CD8-positive, alpha-beta T cell (primary cell): ENCODE measurements at regions of chrX and their contacts with region 1.

Region 1: DNA sequence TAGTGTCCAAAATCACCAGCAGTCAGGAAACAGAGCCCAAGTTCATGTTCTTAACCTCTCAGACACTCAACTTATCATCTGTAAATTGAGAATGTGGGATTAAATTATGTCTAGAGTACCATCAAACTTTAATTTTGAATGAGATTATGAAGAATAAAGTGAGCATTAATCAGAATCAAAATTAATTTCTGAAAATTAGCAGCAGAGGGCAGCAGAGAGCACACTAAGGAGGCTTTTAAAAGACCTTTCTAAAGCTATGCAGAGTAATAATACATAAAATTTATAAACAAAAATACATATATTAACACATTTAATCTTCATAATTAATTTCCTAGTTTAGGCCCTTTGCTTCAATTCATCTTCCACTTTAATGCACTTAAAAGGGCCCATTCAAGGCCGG is 7.1 kb downstream of the TASL start:
- DNase-seq: peak in 2 of 9 experiments; percentile 39 to 53
- ATAC-seq: no peak
- H3K4me3 ChIP-seq: no peak overlapping the region
- H3K4me3 Mint-ChIP-seq: no peak overlapping the region
- H3K27ac ChIP-seq: no peak overlapping the region
- H3K27ac Mint-ChIP-seq: no peak overlapping the region
- H3K4me1 ChIP-seq: no peaks in the 10 kb centered on the region
- H3K4me1 Mint-ChIP-seq: peaks cover 16% of the 10 kb centered on the region
- H3K27me3 ChIP-seq: no peaks in the 10 kb centered on the region
- H3K27me3 Mint-ChIP-seq: no peaks in the 10 kb centered on the region
- CTCF ChIP-seq: peak; percentile 64

Region 2: DNA sequence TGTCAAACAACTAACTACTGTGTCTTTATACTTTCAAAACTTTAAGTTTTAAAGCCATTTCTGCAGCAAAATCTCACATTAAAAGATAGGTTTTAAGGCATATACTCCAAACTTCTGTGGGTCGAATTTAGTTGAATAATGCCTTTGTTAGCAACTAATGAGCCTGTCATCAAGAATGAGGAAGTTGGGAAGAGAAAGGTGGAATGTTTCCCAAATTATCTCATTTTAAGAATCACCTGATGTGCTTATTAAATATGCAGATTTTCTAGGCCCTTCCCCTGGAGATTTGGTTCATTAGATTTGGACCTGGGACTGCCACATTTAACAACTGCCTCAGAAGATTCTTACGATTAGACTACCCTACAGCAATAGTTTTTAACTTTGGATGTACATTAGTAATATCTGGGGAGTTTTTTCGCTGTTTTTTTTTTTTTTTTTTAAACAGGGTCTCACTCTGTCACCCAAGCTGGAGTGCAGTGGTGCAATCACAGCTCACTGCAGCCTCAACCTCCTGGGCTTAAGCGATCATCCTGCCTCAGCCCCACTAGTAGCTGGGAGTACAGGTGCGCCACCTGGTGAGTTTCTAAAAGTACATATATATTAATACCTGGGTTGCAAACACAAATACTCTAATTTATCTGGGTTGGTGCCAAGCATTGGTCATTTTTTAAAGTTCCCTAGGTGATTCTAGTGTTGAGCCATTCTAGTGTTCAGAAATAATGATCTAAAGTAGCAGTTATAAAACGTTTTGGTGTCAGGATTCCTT is 23.1 kb after region 1 on chrX:
- CTCF ChIA-PET with region 1: interaction called, 21 read pairs
- POLR2A ChIA-PET with region 1: no interaction called
- intact Hi-C with region 1: loop called in 1 of 2 experiments (anchors 1 kb)
- DNase-seq: peak in 5 of 9 experiments; percentile 13 to 58 (median 24)
- ATAC-seq: no peak
- H3K4me3 ChIP-seq: no peak overlapping the region
- H3K4me3 Mint-ChIP-seq: no peak overlapping the region
- H3K27ac ChIP-seq: no peak overlapping the region
- H3K27ac Mint-ChIP-seq: no peak overlapping the region
- H3K4me1 ChIP-seq: no peaks in the 10 kb centered on the region
- H3K4me1 Mint-ChIP-seq: peaks cover 3% of the 10 kb centered on the region
- H3K27me3 ChIP-seq: no peaks in the 10 kb centered on the region
- H3K27me3 Mint-ChIP-seq: peaks cover 1% of the 10 kb centered on the region
- CTCF ChIP-seq: no peak